Ascending aorta (tissue), 2 donors: ENCODE measurements at regions of chr14 and their contacts with region 1.

Region 1: GRCh38 chr14:99768381-99768780 is 24.8 kb upstream of the EML1 start:
- DNase-seq: no peak
- H3K4me3 ChIP-seq: no peak overlapping the region
- H3K27ac ChIP-seq: peak overlapping the region; percentile 89 to 95
- H3K4me1 ChIP-seq: peaks cover 10 to 16% of the 10 kb centered on the region in 2 donors
- H3K27me3 ChIP-seq: no peaks in the 10 kb centered on the region
- CTCF ChIP-seq: no peak

Region 2: DNA sequence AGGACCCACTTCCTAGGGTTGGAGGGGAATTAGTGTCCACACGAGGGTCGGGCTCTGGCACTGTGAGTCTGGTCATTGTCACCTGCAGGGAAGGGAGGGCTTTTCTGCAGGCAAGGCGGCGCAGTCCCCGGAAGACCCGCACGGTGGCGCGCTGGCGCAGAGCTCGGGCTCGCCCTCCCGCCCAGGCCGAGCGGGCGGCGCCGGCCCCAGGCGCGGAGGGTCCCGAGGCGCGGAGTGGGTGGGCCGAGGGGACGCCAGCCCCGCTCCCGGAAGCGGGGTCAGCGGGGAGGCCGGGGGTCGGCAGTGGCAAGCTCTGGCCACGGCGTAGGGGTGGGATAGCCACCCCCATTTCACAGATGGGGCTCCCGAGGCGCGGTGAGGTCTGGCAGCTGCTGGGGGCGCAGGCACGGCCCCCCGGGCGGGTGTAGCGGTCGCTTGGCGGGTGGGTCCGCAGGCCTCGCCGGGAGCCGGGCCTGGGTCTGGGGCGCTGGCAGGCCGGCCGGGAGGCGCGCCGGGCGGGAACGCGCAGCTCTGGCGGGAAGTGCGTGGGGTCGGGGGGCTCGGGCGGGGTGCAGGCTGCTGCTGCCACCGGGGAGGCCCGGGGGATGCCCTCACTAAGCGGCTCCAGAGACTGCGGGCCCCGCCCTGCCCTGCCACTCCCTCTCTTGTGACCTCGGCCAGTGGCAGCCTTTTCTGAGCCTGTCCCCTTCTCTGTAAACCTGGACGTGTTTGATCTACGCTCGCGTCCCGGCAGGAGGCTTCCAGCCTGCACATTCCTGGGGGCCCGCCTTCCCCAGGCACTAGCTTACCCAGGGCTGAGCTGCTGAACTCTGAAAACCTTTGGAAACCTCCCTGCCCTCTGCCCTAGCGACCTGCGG is 38.2 kb before region 1 on chr14:
- intact Hi-C with region 1: loop called (anchors 2 kb)
- DNase-seq: peak; percentile 1 to 81
- H3K4me3 ChIP-seq: peak overlapping the region; percentile 52 to 85
- H3K27ac ChIP-seq: peak overlapping the region; percentile 22 to 30
- H3K4me1 ChIP-seq: peaks cover 3 to 13% of the 10 kb centered on the region in 2 donors
- H3K27me3 ChIP-seq: no peaks in the 10 kb centered on the region
- CTCF ChIP-seq: peak; percentile 66 to 89 (median 78)

Region 3: GRCh38 chr14:99749142-99749541 is 19.2 kb before region 1 on chr14:
- intact Hi-C with region 1: loop called (anchors 1 kb)
- DNase-seq: no peak
- H3K4me3 ChIP-seq: no peak overlapping the region
- H3K27ac ChIP-seq: peak overlapping the region in 1 of 2 donors; percentile 21
- H3K4me1 ChIP-seq: peaks cover 7 to 51% of the 10 kb centered on the region in 2 donors
- H3K27me3 ChIP-seq: no peaks in the 10 kb centered on the region
- CTCF ChIP-seq: no peak

Region 4: DNA sequence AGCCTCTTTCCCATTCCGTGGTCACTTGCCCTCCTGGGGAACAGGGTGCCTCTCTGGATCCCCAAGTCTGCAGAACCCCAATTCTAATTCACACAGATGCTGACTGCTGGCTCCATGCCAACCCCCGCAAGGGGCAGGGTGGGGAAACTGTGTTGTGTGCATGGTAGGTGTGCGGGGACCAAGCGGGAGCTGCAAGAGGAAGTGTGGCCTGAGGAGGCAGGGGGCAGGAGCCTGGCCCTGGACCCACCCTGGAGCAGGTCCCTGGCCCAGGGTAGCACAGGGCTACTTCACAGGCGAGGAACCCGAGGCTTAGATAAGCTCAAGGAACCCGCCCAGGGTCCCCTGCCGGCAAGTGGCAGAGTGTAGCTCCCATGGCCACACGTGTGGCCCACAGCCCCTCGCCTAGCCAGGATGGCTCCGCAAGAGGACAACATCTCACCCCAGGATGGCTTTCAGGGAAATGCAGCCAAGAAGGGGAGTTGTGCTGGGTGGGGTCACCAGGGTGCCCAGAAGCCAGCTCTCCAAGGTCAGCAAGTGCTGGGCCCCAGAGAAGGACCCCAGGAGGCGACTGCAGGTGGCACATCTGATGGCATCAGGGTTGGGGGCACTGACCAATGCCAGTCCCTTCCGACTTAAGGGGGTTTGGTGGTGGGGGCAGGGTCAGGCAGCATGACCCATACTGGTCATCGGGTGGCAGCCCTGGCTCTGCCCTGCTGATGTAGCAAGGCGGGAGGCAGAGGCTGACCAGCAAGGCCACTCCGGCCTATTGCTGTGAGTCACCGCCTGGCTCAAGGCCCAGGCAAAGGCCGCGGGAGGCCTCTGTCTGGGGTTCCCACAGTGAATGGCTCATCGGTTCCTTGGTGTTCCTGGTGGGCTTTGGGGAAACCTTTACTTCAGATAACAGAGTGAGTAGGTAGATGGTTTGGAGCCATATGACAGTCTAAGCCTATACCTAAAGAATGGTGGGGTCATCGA is 12.5 kb before region 1 on chr14:
- intact Hi-C with region 1: loop called (anchors 1 kb)
- DNase-seq: peak; percentile 78 to 97
- H3K4me3 ChIP-seq: no peak overlapping the region
- H3K27ac ChIP-seq: peak overlapping the region; percentile 22 to 48
- H3K4me1 ChIP-seq: peaks cover 16 to 47% of the 10 kb centered on the region in 2 donors
- H3K27me3 ChIP-seq: no peaks in the 10 kb centered on the region
- CTCF ChIP-seq: no peak

Region 5: GRCh38 chr14:99779751-99780150 is 11.4 kb after region 1 on chr14:
- intact Hi-C with region 1: no loop called
- DNase-seq: no peak
- H3K4me3 ChIP-seq: no peak overlapping the region
- H3K27ac ChIP-seq: no peak overlapping the region
- H3K4me1 ChIP-seq: no peaks in the 10 kb centered on the region
- H3K27me3 ChIP-seq: no peaks in the 10 kb centered on the region
- CTCF ChIP-seq: no peak

Region 6: DNA sequence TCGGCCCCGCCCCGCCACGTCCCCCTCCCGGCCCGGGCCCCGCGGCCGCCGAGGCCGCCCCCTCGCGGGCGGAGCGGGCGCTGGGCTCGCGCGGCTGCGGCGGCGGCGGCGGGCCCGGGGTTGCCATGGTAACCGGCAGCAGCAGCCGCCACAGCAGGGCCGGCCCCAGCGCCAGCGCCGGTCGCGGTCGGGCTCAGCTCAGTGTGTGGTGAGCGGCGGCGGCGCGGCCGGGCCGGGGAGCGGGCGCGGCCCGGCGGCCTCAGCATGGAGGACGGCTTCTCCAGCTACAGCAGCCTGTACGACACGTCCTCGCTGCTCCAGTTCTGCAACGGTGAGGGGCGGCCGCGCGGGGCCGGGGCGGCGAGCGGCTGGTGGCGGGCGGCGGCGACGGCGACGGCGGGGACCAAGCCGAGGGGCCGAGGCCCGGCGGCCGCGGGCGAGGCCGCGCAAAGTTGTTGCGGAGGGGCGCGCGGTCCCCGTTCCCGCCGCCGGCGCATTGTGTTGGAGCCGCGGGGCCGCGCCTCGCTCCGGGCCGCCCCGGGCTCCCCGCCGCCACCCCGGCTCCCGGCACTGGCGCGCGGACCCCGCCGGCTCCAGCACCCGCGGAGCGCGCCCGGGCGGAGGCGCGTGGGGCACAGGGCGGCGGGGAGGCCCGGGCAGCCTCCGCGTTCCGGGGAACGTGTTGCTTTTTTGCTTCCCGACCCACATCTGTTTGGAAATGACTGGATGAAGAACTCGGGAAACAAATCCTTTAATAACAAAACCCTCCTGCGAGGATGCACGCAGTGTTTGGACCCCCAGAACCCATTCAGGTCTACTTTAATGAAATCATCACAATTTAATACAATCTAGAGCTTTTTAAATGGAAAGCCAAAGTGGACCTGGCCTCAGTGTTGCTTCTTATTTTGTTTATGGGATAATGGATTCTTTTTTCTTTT is 25.1 kb after region 1 on chr14 and contains the start of gene EML1:
- intact Hi-C with region 1: loop called (anchors 1 kb)
- DNase-seq: peak in 1 of 2 donors; percentile 89
- H3K4me3 ChIP-seq: peak within 1 kb of the TSS; percentile 73 to 84
- H3K27ac ChIP-seq: peak within 1 kb of the TSS; percentile 88 to 96
- H3K4me1 ChIP-seq: peaks cover 0 to 6% of the 10 kb centered on the region in 2 donors
- H3K27me3 ChIP-seq: no peaks in the 10 kb centered on the region
- CTCF ChIP-seq: no peak
- total RNA-seq, gene EML1: 28.3 TPM

Region 7: DNA sequence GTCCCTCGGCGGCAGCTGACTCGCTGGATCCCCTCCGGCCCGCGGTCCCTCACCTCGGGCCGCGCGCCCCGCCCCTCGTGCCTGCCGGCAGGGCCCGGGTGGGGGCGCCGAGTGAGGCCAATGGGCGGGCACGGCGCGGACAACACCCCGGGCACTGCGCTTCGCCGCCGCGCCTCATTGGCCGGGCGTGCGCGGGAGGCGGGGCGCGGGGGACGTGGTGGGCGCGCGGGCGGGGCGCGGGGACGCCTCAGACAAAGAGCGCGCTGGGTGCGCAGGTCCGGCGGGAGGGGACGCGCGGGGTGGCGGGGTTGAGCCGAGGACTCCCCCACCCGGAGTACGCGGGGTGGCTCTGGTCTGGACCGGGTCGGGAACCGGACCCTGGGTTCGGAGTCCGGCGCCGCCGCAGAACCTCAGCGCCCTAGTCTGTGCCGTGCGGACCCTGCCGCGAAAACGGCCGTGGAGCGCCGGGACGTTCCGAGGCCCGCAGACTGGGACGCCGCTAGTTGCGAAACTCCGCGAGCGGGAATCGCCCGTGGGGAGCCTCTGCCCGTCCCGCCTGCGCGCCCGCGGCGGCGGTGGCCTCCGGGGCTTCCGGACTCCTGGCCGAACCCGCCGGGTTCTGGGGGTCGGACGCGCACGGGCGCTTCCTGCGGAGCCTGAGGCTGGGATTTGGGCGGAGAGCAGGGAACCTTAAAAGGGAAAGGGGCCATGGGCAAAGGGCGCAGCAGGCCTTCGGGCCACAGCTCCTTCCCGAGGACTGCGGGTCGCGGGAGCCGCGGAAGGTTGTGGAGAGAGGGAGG is 538.2 kb after region 1 on chr14 and contains the start of gene SLC25A29:
- intact Hi-C with region 1: loop called (anchors 10 kb)
- DNase-seq: peak; percentile 54 to 95
- H3K4me3 ChIP-seq: peak within 1 kb of the TSS; percentile 90 to 95
- H3K27ac ChIP-seq: peak within 1 kb of the TSS; percentile 74 to 83
- H3K4me1 ChIP-seq: peaks cover 3 to 12% of the 10 kb centered on the region in 2 donors
- H3K27me3 ChIP-seq: no peaks in the 10 kb centered on the region
- CTCF ChIP-seq: no peak
- total RNA-seq, gene SLC25A29: 193 TPM